Right lobe of liver (tissue), 6 donors: ENCODE measurements at regions of chr2 and their contacts with region 1.

Region 1: DNA sequence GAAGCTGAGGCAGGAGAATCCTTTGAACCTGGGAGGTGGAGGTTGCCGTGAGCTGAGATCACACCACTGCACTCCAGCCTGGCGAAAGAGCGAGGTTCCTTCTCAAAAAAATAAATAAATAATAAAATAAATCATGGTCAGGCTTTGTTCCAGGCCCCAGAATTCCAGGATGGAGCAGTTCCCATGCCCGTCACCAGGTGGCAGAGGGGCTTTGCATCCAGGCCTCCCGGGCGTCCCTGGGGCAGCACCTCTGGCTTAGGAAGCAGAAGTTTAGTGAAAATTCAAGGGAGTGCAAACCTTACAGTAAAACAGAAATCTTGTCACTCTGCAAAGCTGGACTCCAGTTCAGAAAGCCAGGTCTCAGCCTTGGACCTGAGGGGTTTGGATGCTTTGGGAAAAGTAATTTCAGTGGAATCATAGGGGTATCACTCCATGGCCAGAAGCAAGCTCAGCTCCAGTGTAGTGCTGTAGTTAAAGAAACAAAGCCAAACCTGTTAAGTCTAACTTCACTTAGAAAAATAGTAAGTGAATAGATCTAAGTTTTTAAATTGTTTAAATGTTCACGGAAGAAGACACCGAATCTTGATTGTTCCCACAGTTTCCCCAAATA is 512.7 kb downstream of the CMPK2 start:
- DNase-seq: peak; percentile 49 to 61 (median 58)
- ATAC-seq: peak; percentile 77 to 86 (median 80)
- H3K4me3 ChIP-seq: no peak overlapping the region
- H3K27ac ChIP-seq: no peak overlapping the region
- H3K4me1 ChIP-seq: no peaks in the 10 kb centered on the region
- H3K27me3 ChIP-seq: no peaks in the 10 kb centered on the region
- CTCF ChIP-seq: peak; percentile 42 to 67 (median 50)
- POLR2A ChIP-seq: no peak

Region 2: DNA sequence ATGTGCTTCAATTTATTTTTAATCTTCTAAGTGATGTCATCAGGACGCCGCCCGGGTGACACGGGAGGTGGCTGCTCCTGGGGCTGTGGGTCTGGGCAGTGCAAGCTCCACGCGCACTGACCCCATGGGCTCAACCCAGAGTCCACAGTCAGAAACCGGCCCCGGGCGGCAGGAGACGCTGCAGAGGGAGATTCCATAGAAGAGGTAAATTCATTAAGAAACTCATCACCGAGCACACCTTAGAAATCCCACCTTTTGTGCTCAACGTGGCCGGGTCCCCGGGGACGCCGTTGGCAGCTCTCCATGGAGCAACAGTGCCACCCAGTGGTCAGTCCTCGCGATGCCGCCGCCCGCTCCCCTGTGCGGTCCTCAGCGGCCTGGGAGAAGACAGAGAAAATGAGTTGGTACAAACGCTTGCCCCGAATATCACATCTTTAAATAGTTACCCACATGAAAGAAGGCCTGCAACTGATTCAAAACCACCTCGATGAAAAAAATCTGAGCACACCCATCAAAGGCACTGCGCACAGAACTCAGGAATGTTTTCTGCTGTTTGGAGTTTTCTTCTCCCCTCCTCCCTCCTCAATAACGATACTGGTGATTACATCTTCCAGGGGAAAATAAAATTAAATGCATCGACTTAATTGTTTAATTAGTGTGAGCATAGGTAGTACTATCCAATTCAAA is 420.1 kb after region 1 on chr2:
- intact Hi-C with region 1: loop called (anchors 10 kb)
- DNase-seq: peak; percentile 65 to 70 (median 66)
- ATAC-seq: peak; percentile 89 to 95 (median 92)
- H3K4me3 ChIP-seq: peak overlapping the region in 1 of 3 donors; percentile 24
- H3K27ac ChIP-seq: no peak overlapping the region
- H3K4me1 ChIP-seq: no peaks in the 10 kb centered on the region
- H3K27me3 ChIP-seq: no peaks in the 10 kb centered on the region
- CTCF ChIP-seq: peak; percentile 88 to 97 (median 92)
- POLR2A ChIP-seq: no peak